ENCODE measurements at regions of chr4 and their contacts with region 1.

Region 1: GRCh38 chr4:119971431-119972084 is 95.1 kb downstream of the MAD2L1 start:
- DNase-seq: no peak
- ATAC-seq: no peak
- H3K4me3 Mint-ChIP-seq: no peak overlapping the region
- H3K27ac Mint-ChIP-seq: no peak overlapping the region
- H3K4me1 Mint-ChIP-seq: no peaks in the 10 kb centered on the region
- H3K27me3 Mint-ChIP-seq: peaks cover 5% of the 10 kb centered on the region

Region 2: GRCh38 chr4:119984996-119985395 is 13.4 kb after region 1 on chr4:
- CTCF ChIA-PET with region 1: no interaction called
- POLR2A ChIA-PET with region 1: no interaction called
- intact Hi-C with region 1: no loop called
- DNase-seq: no peak
- ATAC-seq: no peak
- H3K4me3 Mint-ChIP-seq: no peak overlapping the region
- H3K27ac Mint-ChIP-seq: no peak overlapping the region
- H3K4me1 Mint-ChIP-seq: no peaks in the 10 kb centered on the region
- H3K27me3 Mint-ChIP-seq: peaks cover 3% of the 10 kb centered on the region

Region 3: DNA sequence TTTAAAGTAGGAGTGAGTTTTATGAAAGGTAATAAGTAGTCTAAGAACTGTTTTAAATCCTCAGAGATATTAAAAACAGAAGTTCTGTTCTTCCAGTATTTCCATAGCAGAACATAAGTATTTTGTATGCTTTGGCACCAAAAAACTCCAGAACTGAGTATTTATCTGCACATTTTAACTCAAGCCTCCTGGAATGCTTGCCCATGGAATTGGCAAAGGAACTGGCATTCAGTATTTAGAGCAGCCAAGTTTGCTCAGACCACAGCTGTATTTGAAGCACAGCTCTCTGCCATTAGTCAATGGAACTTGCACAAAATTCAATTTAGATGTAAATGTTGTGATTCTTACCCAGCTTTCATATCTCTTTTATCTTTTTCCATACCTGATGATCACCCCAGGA is 1058.6 kb after region 1 on chr4:
- CTCF ChIA-PET with region 1: no interaction called
- POLR2A ChIA-PET with region 1: interaction called, 11 read pairs
- intact Hi-C with region 1: no loop called
- DNase-seq: no peak
- ATAC-seq: no peak
- H3K4me3 Mint-ChIP-seq: no peak overlapping the region
- H3K27ac Mint-ChIP-seq: no peak overlapping the region
- H3K4me1 Mint-ChIP-seq: no peaks in the 10 kb centered on the region
- H3K27me3 Mint-ChIP-seq: peaks cover 2% of the 10 kb centered on the region